ENCODE measurements at regions of chr3 and their contacts with region 1.

Region 1: GRCh38 chr3:52498137-52499054 is 3.3 kb downstream of the STAB1 start:
- DNase-seq: peak; percentile 69 to 73
- ATAC-seq: peak in 1 of 4 donors; percentile 18
- H3K4me3 ChIP-seq: no peak overlapping the region
- H3K27ac ChIP-seq: no peak overlapping the region
- H3K4me1 ChIP-seq: peaks cover 4% of the 10 kb centered on the region
- H3K27me3 ChIP-seq: no peaks in the 10 kb centered on the region
- CTCF ChIP-seq: no peak

Region 2: GRCh38 chr3:52536369-52537164 is 38.2 kb after region 1 on chr3 and contains the start of gene UQCC5:
- intact Hi-C with region 1: loop called in 1 of 2 experiments (anchors 5 kb)
- DNase-seq: peak; percentile 98 to 99
- ATAC-seq: peak; percentile 91 to 94 (median 93)
- H3K4me3 ChIP-seq: peak within 1 kb of the TSS; percentile 83
- H3K27ac ChIP-seq: peak within 1 kb of the TSS; percentile 96
- H3K4me1 ChIP-seq: peaks cover 33% of the 10 kb centered on the region
- H3K27me3 ChIP-seq: no peaks in the 10 kb centered on the region
- CTCF ChIP-seq: no peak
- total RNA-seq, gene UQCC5: 29.5 to 32.7 (median 31.0) TPM

Region 3: DNA sequence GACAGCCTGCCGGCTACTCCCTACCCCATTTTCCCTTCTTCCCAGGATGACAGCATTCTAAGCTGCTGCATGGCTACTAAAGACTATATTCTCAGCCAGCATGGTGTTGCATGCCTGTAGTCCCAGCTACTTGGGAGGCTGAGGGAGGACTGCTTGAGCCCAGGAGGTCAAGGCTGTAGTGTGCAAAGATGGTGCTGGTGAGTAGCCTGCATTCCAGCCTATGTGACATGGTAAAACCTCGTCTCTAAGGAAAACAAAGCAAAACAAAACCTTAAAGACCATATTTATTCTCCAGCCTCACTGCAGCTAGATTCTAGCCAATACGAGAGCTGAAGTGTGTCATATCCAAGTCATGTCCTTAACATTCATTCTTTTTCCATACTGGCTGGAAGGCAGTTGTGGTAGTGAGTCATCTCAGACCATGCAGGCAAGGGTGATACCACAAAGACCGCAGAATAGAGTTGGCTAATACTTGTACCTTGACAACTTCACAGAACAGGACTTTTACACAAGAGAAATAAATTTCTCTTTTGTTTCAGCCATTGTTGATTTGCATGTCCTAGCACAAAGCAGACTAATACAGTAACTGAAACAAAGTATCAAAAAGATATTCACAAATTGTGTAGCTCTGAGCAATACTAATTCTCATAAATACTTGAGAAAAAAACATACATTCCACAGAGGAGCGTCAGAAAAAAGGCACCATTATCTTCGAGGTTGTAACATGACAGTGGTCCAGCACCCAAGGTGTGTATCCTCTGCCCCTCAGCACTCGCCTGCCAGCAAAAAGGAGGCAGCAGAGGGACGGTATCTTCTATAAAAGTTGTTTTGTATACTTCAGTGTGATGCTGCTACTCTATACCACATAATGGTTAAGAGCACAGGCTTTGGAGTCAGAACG is 172.5 kb after region 1 on chr3:
- intact Hi-C with region 1: no loop called
- DNase-seq: no peak
- ATAC-seq: peak; percentile 88 to 99 (median 96)
- H3K4me3 ChIP-seq: no peak overlapping the region
- H3K27ac ChIP-seq: peak overlapping the region; percentile 57
- H3K4me1 ChIP-seq: peaks cover 7% of the 10 kb centered on the region
- H3K27me3 ChIP-seq: no peaks in the 10 kb centered on the region
- CTCF ChIP-seq: no peak